ENCODE measurements at regions of chr7 and their contacts with region 1.

Region 1: DNA sequence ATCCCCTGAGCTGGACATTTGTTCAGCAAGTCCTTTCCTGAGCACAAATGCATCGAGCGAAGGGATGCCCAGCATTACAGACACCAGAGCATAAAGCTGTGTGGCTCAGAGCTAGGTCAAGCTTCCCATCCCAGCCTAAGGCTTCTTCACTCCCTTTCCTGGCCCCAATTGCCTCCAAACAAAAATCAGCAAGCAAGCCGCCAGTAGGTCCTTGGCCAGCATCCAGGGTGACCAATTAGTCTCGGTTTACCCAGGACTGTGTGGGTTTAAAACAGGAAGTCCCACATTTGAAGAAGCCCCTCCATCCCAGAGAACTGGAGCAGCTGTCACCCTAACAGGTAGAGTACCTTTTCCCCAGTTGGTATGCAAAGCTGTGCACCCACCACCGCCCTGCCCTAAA is 51.2 kb downstream of the PRKAG2 start:
- H3K4me3 ChIP-seq: no peak overlapping the region
- H3K27ac ChIP-seq: no peak overlapping the region
- H3K4me1 ChIP-seq: no peaks in the 10 kb centered on the region
- CTCF ChIP-seq: no peak

Region 2: DNA sequence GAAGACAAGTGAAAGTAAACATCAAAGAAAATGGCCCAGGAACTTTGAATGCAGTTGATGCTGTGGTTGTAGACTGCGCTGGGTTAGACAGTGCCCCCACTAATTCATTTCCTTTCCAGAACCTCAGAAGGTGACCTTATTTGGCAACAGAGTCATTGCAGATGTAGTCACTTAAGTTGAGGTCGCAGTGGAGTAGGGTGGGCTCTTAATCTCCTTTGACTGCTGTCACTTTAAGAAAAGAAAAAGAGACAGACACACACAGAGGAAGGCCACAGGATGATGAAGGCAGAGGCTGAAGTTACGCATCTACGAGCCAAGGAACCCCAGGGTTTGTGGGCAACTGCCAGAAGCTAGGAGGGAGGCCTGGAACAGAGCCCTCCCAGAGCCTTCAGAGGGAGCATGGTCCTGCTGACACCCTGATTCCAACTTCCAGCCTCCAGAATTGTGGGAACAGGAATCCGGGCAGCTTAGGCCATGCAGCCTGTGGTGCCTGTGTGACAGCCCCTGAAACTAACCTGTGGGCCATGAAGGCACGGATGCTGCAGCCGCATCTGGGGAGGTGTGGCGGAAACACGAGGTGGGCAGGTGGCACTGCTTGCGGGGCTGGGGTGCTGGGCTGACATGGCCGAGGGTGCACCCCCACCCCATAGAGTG is 56.4 kb before region 1 on chr7:
- CTCF ChIA-PET with region 1: interaction called, 10 read pairs
- POLR2A ChIA-PET with region 1: no interaction called
- H3K4me3 ChIP-seq: no peak overlapping the region
- H3K27ac ChIP-seq: no peak overlapping the region
- H3K4me1 ChIP-seq: no peaks in the 10 kb centered on the region
- CTCF ChIP-seq: no peak

Region 3: DNA sequence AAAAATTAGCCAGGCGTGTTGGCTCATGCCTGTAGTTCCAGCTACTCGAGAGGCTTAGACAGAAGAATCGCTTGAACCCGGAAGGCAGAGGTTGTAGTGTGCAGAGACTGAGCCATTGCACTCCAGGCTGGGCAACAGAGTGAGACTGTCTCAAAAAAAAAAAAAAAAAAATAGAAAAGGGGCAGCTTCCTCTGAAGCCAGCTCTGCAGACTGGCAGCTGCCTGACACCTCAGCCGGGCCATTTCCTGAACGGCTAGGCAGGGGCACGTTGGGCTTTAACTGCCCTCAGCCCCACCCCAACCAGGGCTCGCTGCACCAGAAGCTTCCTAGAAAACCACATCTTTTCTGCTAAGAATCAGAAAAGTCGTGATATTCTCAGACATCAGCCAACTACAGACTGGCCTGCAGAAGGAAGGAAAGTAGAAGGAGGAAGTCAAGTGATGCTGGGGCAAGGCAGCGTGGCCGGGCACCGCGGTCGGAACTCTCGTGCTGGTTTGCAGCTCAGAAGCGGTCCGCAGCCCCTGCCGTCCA is 13.2 kb after region 1 on chr7:
- CTCF ChIA-PET with region 1: no interaction called
- POLR2A ChIA-PET with region 1: no interaction called
- H3K4me3 ChIP-seq: no peak overlapping the region
- H3K27ac ChIP-seq: no peak overlapping the region
- H3K4me1 ChIP-seq: no peaks in the 10 kb centered on the region
- CTCF ChIP-seq: no peak

Region 4: GRCh38 chr7:151851145-151851751 is 25.5 kb after region 1 on chr7:
- CTCF ChIA-PET with region 1: no interaction called
- POLR2A ChIA-PET with region 1: no interaction called
- H3K4me3 ChIP-seq: no peak overlapping the region
- H3K27ac ChIP-seq: no peak overlapping the region
- H3K4me1 ChIP-seq: no peaks in the 10 kb centered on the region
- CTCF ChIP-seq: no peak

Measured in HEK293 (cell line).